ENCODE measurements at regions of chr1 and their contacts with region 1.

Region 1: DNA sequence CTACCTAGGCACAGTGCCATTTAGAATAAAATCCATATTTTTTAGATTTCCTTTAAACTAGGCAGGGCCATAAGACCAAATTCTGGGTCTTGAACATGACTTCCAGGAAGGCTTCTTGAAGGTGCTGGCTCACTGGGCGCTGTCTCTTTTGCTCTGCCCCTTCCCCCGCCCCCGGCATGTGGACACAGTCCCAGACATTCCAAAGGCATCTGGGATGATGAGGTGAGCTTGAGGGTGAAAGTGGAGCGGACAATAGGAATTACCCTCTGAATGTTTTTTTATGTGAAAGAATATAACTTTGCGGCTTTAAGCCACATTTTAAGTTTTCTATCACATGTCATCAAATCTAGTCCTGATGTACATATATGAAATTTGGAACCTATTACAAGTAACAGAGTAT is 29.4 kb downstream of the RWDD3 start:
- DNase-seq: no peak
- ATAC-seq: no peak
- H3K4me3 ChIP-seq: no peak overlapping the region
- H3K27ac ChIP-seq: no peak overlapping the region
- H3K4me1 ChIP-seq: no peaks in the 10 kb centered on the region
- H3K27me3 ChIP-seq: no peaks in the 10 kb centered on the region; the same call in 1 of the 2 replicates
- CTCF ChIP-seq: no peak
- POLR2A ChIP-seq: no peak
- RAD21 ChIP-seq: no peak

Region 2: DNA sequence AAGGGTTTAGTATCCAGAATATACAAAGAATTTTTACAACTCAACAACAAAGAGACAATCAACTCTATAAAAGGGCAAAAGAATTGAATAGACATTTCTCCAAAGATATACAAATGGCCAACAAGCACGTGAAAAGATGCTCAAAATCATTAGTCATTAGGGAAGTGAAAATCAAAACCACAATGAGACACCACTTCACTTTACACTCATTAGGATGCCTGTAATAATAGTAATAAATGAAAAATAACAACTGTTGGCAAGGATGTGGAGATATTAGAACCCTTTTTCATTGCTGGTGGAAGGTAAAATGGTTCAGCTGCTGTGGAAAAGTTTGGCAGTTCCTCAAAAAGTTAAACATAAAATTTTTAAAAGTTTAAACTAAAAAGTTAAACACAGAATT is 852.2 kb before region 1 on chr1:
- CTCF ChIA-PET with region 1: no interaction called
- POLR2A ChIA-PET with region 1: no interaction called
- dilution Hi-C with region 1: no loop called
- in situ Hi-C with region 1: no loop called
- intact Hi-C with region 1: no loop called
- DNase-seq: no peak
- ATAC-seq: peak; percentile 42
- H3K4me3 ChIP-seq: no peak overlapping the region
- H3K27ac ChIP-seq: no peak overlapping the region
- H3K4me1 ChIP-seq: peaks cover 2% of the 10 kb centered on the region; the same call in 1 of the 2 replicates
- H3K27me3 ChIP-seq: no peaks in the 10 kb centered on the region; the same call in 1 of the 2 replicates
- CTCF ChIP-seq: no peak
- POLR2A ChIP-seq: no peak
- RAD21 ChIP-seq: no peak

Region 3: DNA sequence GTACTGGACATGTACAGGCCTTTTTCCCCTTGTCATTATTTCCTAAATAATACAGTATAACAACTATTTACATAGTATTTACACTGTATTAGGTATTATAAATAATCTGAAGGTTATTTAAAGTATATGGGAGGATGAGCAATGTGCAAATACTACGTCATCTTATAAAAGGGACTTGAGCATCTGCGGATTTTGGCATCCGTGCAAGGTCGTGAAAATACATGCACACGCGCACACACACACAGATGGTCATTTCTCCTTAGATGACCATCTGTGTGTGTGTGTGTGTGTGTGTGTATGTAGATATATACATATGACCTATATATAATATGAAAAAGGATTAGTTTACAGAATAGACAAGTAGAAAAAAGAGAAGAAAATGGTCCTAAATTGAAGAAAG is 206.1 kb before region 1 on chr1:
- CTCF ChIA-PET with region 1: no interaction called
- POLR2A ChIA-PET with region 1: no interaction called
- dilution Hi-C with region 1: no loop called
- in situ Hi-C with region 1: no loop called
- intact Hi-C with region 1: no loop called
- DNase-seq: no peak
- ATAC-seq: no peak
- H3K4me3 ChIP-seq: no peak overlapping the region
- H3K27ac ChIP-seq: no peak overlapping the region
- H3K4me1 ChIP-seq: no peaks in the 10 kb centered on the region; the same call in 1 of the 2 replicates
- H3K27me3 ChIP-seq: no peaks in the 10 kb centered on the region
- CTCF ChIP-seq: no peak
- POLR2A ChIP-seq: no peak
- RAD21 ChIP-seq: no peak

Region 4: GRCh38 chr1:95247607-95248006 is 15.8 kb before region 1 on chr1:
- CTCF ChIA-PET with region 1: no interaction called
- POLR2A ChIA-PET with region 1: interaction called, 11 read pairs
- dilution Hi-C with region 1: no loop called
- in situ Hi-C with region 1: no loop called
- intact Hi-C with region 1: no loop called
- DNase-seq: no peak
- ATAC-seq: no peak
- H3K4me3 ChIP-seq: no peak overlapping the region
- H3K27ac ChIP-seq: no peak overlapping the region
- H3K4me1 ChIP-seq: no peaks in the 10 kb centered on the region
- H3K27me3 ChIP-seq: no peaks in the 10 kb centered on the region
- CTCF ChIP-seq: no peak
- POLR2A ChIP-seq: no peak
- RAD21 ChIP-seq: no peak